Ovary (tissue), 10 donors: ENCODE measurements at regions of chr19 and their contacts with region 1.

Region 1: GRCh38 chr19:32041681-32042292 is 303.6 kb upstream of the ZNF507 start:
- DNase-seq: peak; percentile 69 to 84 (median 77)
- H3K4me3 ChIP-seq: peak overlapping the region; percentile 11
- H3K27ac ChIP-seq: peak overlapping the region in 1 of 2 donors; percentile 33
- H3K4me1 ChIP-seq: peaks cover 10% of the 10 kb centered on the region
- H3K27me3 ChIP-seq: no peaks in the 10 kb centered on the region
- CTCF ChIP-seq: peak; percentile 80 to 84 (median 81)
- EP300 ChIP-seq: no peak
- POLR2A ChIP-seq: no peak

Region 2: GRCh38 chr19:30682999-30683536 is 1358.7 kb before region 1 on chr19:
- intact Hi-C with region 1: loop called in 2 of 4 experiments (anchors 5 to 10 kb)
- DNase-seq: peak; percentile 68 to 87 (median 82)
- H3K4me3 ChIP-seq: no peak overlapping the region
- H3K27ac ChIP-seq: no peak overlapping the region
- H3K4me1 ChIP-seq: no peaks in the 10 kb centered on the region
- H3K27me3 ChIP-seq: no peaks in the 10 kb centered on the region
- CTCF ChIP-seq: peak; percentile 74 to 91 (median 81)
- EP300 ChIP-seq: no peak
- POLR2A ChIP-seq: no peak

Region 3: GRCh38 chr19:30784850-30785457 is 1256.8 kb before region 1 on chr19:
- intact Hi-C with region 1: loop called in 1 of 4 experiments (anchors 5 kb)
- DNase-seq: peak; percentile 41 to 73 (median 63)
- H3K4me3 ChIP-seq: no peak overlapping the region
- H3K27ac ChIP-seq: no peak overlapping the region
- H3K4me1 ChIP-seq: no peaks in the 10 kb centered on the region
- H3K27me3 ChIP-seq: no peaks in the 10 kb centered on the region
- CTCF ChIP-seq: peak in 1 of 3 donors; percentile 38
- EP300 ChIP-seq: no peak
- POLR2A ChIP-seq: no peak

Region 4: DNA sequence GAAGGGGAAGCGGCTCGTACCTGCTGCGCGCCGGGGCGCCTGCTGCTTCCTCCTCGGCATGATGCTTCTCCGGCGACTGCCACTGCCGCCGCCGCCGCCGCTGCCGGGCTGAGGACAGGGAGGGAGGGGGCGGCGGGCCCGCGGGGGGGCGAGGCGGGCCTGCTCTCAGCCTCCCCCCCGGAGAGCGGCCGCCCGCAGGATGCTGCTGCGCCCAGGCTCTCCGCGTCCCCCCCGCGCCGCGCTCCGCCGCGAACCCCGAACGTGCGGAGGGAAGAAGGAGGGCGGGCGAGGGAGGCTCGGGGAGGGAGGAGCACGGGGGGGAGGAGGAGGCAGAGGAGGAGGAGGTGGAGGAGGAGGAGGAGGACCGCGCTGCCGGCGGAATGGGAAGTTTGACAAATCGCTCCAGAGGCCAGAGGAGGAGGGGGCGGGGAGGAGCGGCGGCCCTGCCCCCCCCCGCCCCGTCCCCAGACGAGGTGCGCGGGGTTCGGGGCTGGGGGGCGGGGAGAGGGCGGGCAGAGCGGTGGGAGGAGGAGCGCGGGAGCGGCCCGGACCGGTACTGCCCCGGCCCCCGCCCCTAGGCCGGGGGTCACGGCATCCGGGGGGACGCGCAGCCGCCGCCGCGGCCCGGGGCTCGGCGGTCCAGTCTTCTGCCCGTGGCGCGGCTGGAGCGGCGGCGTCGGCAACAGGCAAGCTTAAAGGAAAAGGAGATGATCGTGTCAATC is 692.5 kb before region 1 on chr19 and contains the start of gene TSHZ3:
- intact Hi-C with region 1: loop called in 2 of 4 experiments (anchors 5 to 10 kb)
- DNase-seq: peak; percentile 89 to 94 (median 91)
- H3K4me3 ChIP-seq: peak within 1 kb of the TSS; percentile 61
- H3K27ac ChIP-seq: peak within 1 kb of the TSS; percentile 95 to 98
- H3K4me1 ChIP-seq: peaks cover 14% of the 10 kb centered on the region
- H3K27me3 ChIP-seq: no peaks in the 10 kb centered on the region
- CTCF ChIP-seq: no peak
- EP300 ChIP-seq: no peak
- POLR2A ChIP-seq: peak; percentile 39
- total RNA-seq, gene TSHZ3: 24.8 to 107 (median 76.2) TPM

Region 5: DNA sequence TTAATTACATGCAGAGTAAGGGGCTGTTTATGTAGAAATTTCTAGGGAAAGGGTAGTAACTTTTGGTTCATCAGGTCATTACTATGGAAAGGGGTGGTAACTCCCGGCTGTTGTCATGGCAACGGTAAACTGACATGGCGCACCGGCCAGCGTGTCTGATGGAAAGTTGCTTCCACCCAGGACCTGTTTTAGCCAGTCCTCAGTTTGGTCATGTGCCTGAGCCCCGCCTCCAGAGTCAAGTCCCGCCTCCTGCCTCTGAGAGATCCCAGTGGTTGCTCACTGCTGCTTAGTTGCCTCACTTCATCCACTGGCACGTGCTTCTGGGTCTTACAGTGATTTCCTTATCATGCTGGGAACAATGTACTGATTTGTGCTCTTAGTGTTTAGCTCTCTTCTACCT is 151.6 kb before region 1 on chr19:
- intact Hi-C with region 1: no loop called
- DNase-seq: peak; percentile 78 to 92 (median 87)
- H3K4me3 ChIP-seq: no peak overlapping the region
- H3K27ac ChIP-seq: peak overlapping the region in 1 of 2 donors; percentile 51
- H3K4me1 ChIP-seq: peaks cover 25% of the 10 kb centered on the region
- H3K27me3 ChIP-seq: no peaks in the 10 kb centered on the region
- CTCF ChIP-seq: no peak
- EP300 ChIP-seq: no peak
- POLR2A ChIP-seq: no peak

Region 6: DNA sequence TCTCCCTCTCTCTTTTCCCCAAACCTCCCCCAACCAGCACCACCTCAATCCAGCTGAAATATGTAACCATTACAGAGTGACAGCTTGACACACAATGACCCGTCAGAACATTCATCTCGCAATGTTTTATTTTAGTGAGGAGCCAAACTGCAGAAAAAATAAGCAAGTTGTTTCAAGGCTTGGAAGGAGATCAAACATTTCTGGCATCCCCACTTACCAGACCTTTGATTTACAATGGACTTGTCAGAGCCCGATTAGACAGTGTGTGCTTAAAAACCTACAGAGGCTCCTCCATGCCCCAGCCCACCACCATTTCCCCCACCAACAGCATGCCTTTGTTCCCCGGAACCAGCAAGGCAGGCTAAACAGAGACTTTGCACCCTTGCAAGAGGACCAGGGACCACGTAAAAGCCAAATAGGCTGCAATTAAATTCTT is 79.2 kb before region 1 on chr19:
- intact Hi-C with region 1: loop called in 1 of 4 experiments (anchors 10 kb)
- DNase-seq: peak in 3 of 5 donors; percentile 43 to 56 (median 47)
- H3K4me3 ChIP-seq: no peak overlapping the region
- H3K27ac ChIP-seq: peak overlapping the region in 1 of 2 donors; percentile 45
- H3K4me1 ChIP-seq: peaks cover 17% of the 10 kb centered on the region
- H3K27me3 ChIP-seq: no peaks in the 10 kb centered on the region
- CTCF ChIP-seq: no peak
- EP300 ChIP-seq: no peak
- POLR2A ChIP-seq: no peak

Region 7: DNA sequence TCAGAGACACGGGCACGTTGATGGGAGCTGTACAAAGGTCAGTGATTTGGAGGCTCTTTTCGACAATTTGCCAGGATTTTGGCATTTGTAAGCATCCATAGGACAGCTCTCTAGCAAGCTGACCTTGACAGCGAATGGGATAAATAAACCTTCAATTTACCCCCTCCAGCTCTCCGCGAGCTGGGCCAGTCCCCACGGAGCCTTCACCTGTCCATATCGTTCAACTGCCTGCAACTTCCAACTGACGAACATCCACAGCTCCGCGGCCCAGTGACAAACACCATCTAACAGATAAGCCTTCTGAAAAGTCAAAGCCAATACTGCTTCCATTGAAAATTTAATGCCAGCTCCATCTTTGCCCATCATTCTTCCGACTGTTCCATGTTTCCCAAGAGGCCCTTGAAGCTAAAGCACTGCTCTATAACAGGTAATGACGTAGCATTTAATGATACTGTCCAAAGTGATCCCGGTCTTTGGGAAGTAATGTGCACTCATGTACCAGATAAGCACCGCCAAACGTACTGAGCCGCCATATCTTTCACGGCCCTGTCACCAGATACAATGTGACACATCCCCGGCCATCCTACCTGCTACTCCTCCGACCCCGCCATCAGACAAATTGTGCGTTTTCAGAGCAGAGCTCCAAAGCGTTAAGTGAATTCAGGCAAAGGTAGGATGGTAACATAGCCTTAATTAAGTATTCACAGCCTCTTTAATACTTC is 61.7 kb before region 1 on chr19:
- intact Hi-C with region 1: loop called in 1 of 4 experiments (anchors 10 kb)
- DNase-seq: no peak
- H3K4me3 ChIP-seq: no peak overlapping the region
- H3K27ac ChIP-seq: no peak overlapping the region
- H3K4me1 ChIP-seq: no peaks in the 10 kb centered on the region
- H3K27me3 ChIP-seq: no peaks in the 10 kb centered on the region
- CTCF ChIP-seq: no peak
- EP300 ChIP-seq: no peak
- POLR2A ChIP-seq: no peak